Mammary epithelial cell (primary cell): ENCODE measurements at regions of chr7 and their contacts with region 1.

Region 1: DNA sequence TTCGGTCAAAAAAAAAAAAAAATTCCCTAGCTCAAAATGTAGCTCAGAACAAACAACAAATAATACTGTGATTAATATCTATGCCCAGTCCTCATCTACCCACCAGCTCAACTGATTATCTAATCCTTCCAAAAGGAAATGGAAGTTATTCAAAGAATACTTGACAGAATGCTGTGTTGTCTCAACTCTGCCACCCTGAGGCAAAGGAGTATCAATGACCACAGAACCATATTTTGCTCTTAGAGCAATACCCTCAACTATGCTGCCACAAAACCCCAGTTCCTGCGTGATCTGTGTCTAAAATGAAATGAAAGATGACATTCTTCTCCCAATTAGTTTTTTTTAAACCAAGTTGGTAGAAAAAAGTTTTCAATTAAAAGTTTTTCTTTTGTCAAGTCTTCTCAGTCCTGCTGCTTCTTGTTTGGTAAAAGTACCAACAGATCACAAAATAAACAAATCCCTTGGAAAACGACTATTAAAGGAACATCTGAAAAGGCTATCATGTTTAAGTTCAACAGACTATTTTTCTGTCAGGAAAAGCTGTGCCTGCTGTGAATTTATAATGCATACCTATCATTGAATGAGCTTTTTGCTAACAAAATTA is 21.6 kb downstream of the RBM28 start:
- DNase-seq: peak; percentile 37
- H3K4me3 ChIP-seq: no peak overlapping the region
- H3K27ac ChIP-seq: no peak overlapping the region
- H3K4me1 ChIP-seq: no peaks in the 10 kb centered on the region
- H3K27me3 ChIP-seq: no peaks in the 10 kb centered on the region
- CTCF ChIP-seq: peak; percentile 39 to 66

Region 2: DNA sequence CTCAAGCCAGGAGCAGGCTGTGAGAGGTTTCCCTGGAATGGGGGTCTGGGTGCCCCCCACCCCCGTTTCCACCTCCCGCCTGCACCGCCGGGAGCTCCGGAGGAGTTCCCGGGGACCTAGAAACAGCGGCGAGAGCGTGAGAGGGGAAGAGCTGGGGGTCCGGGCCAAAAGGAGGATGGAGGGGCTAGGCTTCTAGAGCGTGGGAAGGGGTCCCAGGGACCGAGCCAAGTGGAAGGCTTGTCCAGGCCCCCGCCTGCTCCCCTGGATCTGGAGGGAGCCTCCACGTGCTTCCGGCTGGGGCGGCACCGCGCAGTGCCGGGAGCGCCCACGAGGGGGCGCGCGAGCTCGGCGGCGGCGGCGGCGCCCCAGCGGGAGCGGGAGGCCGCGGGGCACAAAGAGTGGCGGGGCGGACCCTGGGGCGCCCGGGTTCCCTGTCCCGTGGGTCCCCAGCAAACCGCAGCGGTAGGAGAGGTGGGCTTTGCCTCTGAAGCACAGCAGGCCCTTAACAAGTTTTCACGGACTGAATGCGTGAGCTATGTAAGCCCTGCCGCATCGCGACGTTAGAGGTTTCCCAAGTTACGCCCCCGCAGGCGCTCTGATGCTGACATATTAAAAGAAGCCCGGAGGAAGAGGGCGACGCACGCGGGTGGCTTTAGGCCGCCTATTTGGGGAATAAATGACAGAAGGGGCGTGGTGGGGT is 186.5 kb before region 1 on chr7:
- CTCF ChIA-PET with region 1: no interaction called
- dilution Hi-C with region 1: no loop called
- in situ Hi-C with region 1: no loop called
- intact Hi-C with region 1: loop called (anchors 2 kb)
- DNase-seq: peak; percentile 45
- H3K4me3 ChIP-seq: peak overlapping the region; percentile 62 to 66 (median 64)
- H3K27ac ChIP-seq: no peak overlapping the region
- H3K4me1 ChIP-seq: peaks cover 13% of the 10 kb centered on the region
- H3K27me3 ChIP-seq: no peaks in the 10 kb centered on the region
- CTCF ChIP-seq: peak; percentile 57 to 63

Region 3: GRCh38 chr7:128217030-128217805 is 104.9 kb before region 1 on chr7:
- CTCF ChIA-PET with region 1: no interaction called
- dilution Hi-C with region 1: no loop called
- in situ Hi-C with region 1: no loop called
- intact Hi-C with region 1: loop called (anchors 2 kb)
- DNase-seq: peak; percentile 96
- H3K4me3 ChIP-seq: no peak overlapping the region
- H3K27ac ChIP-seq: peak overlapping the region; percentile 92
- H3K4me1 ChIP-seq: peaks cover 43% of the 10 kb centered on the region
- H3K27me3 ChIP-seq: no peaks in the 10 kb centered on the region
- CTCF ChIP-seq: no peak

Region 4: GRCh38 chr7:128270826-128271272 is 51.3 kb before region 1 on chr7:
- CTCF ChIA-PET with region 1: no interaction called
- dilution Hi-C with region 1: loop called (anchors 5 kb)
- in situ Hi-C with region 1: no loop called
- intact Hi-C with region 1: no loop called
- DNase-seq: no peak
- H3K4me3 ChIP-seq: no peak overlapping the region
- H3K27ac ChIP-seq: no peak overlapping the region
- H3K4me1 ChIP-seq: peaks cover 35% of the 10 kb centered on the region
- H3K27me3 ChIP-seq: no peaks in the 10 kb centered on the region
- CTCF ChIP-seq: no peak

Region 5: GRCh38 chr7:128739048-128739962 is 417.2 kb after region 1 on chr7 and contains the start of gene CALU:
- CTCF ChIA-PET with region 1: no interaction called
- dilution Hi-C with region 1: no loop called
- in situ Hi-C with region 1: no loop called
- intact Hi-C with region 1: no loop called
- DNase-seq: peak; percentile 92
- H3K4me3 ChIP-seq: peak within 1 kb of the TSS; percentile 73 to 98 (median 96)
- H3K27ac ChIP-seq: peak within 1 kb of the TSS; percentile 86
- H3K4me1 ChIP-seq: peaks cover 46% of the 10 kb centered on the region
- H3K27me3 ChIP-seq: no peaks in the 10 kb centered on the region
- CTCF ChIP-seq: no peak
- total RNA-seq, gene CALU: 185 to 232 TPM